ENCODE measurements at regions of chr10 and their contacts with region 1.

Region 1: GRCh38 chr10:67849331-67850011 is 11.5 kb upstream of the DNAJC12 start:
- DNase-seq: peak; percentile 99
- ATAC-seq: peak; percentile 95
- H3K4me3 ChIP-seq: peak overlapping the region; percentile 73
- H3K27ac ChIP-seq: peak overlapping the region; percentile 90
- H3K4me1 ChIP-seq: peaks cover 6% of the 10 kb centered on the region
- H3K27me3 ChIP-seq: no peaks in the 10 kb centered on the region
- CTCF ChIP-seq: no peak

Region 2: GRCh38 chr10:67788025-67788886 is 61.2 kb before region 1 on chr10:
- CTCF ChIA-PET with region 1: interaction called, 21 read pairs
- POLR2A ChIA-PET with region 1: interaction called, 3 read pairs
- intact Hi-C with region 1: loop called (anchors 1 kb)
- DNase-seq: peak; percentile 94
- ATAC-seq: peak; percentile 89
- H3K4me3 ChIP-seq: no peak overlapping the region
- H3K27ac ChIP-seq: no peak overlapping the region
- H3K4me1 ChIP-seq: peaks cover 8% of the 10 kb centered on the region; the same call in 1 of the 2 replicates
- H3K27me3 ChIP-seq: no peaks in the 10 kb centered on the region
- CTCF ChIP-seq: peak; percentile 99

Region 3: DNA sequence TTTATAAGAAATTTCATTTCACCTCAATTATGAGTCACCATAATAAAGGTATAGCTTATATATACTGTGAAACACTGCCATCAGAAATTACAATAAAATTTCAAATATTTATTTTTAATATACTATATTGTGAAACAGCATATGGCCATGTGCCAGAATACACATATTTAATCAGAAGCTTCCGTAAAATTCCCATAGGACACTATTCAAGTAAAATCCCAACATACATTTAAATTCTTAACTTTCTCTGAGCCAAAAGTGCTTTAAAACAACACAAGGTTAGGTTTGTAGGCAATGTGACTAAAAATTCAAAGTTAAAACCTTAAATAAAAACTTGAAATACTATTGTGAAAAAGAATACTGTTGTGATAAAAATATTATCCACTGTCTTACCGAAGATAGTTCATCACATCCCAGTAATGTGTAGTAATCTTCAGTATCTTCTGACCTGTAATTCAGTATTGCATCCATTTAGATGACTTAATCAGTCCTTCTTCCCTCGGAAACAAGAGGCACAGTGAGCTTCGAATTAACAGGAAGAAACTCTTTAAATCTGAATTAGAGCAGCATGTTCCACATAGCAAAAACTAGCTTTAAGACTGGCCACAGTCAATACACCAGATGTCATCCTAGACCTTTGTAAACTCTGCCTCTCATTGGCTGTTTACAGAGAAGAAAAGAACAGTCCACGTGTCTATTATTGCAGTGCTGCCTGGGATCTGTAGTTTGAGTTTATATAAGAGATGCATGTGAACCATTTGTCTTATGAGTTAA is 11.7 kb before region 1 on chr10 and contains the start of gene DNAJC12:
- CTCF ChIA-PET with region 1: interaction called, 4 read pairs
- POLR2A ChIA-PET with region 1: interaction called, 14 read pairs
- intact Hi-C with region 1: loop called (anchors 1 kb)
- DNase-seq: peak; percentile 78
- ATAC-seq: peak; percentile 85
- H3K4me3 ChIP-seq: peak within 1 kb of the TSS; percentile 42
- H3K27ac ChIP-seq: peak within 1 kb of the TSS; percentile 63
- H3K4me1 ChIP-seq: peaks cover 34% of the 10 kb centered on the region
- H3K27me3 ChIP-seq: no peaks in the 10 kb centered on the region
- CTCF ChIP-seq: no peak
- total RNA-seq, gene DNAJC12: 14.2 and 15.5 TPM in 2 replicates

Region 4: DNA sequence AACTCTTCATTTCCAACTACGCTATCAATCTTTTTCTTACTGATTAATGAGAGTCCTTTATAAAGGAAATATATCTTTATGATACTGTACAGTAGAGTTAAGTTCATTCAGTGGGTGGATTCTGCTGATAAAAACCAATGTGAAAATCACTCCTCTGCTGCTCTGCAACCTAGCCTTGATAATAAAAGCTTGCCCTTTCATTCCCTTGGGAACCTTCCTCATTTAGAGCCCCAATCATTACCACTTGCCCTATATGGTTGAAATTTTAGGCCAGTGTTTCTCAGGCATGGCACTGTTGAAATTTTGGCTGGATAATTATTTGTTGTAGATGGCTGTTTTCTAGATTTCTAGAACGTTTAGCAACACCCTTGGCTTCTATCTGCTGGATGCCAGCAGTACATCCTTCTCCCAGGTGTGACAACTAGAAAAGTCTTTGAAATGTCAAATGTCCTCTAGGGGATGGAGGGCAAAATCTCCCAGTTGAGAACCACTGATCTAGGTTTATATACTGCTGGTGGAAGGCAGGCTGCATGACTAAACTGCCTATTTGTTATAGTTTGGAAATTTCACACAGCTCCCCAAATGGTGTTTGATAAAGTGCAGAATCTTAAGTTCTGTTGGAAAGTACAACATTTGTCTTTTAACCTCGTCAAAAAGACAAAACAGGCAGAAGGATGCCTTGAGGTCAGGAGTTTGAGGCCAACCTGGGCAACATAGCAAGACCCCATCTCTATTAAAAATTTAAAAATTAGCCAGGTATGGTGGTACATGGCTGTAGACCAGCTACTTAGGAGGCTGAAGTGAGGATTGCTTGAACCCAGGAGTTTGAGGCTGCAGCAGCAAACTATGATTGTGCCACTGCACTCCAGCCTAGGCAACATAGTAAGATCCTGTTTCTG is 26.1 kb after region 1 on chr10:
- CTCF ChIA-PET with region 1: no interaction called
- POLR2A ChIA-PET with region 1: no interaction called
- intact Hi-C with region 1: no loop called
- DNase-seq: no peak
- ATAC-seq: no peak
- H3K4me3 ChIP-seq: no peak overlapping the region
- H3K27ac ChIP-seq: no peak overlapping the region
- H3K4me1 ChIP-seq: no peaks in the 10 kb centered on the region
- H3K27me3 ChIP-seq: no peaks in the 10 kb centered on the region
- CTCF ChIP-seq: no peak

Region 5: GRCh38 chr10:68074775-68075549 is 225.5 kb after region 1 on chr10 and contains the start of gene HERC4:
- CTCF ChIA-PET with region 1: no interaction called
- POLR2A ChIA-PET with region 1: no interaction called
- intact Hi-C with region 1: loop called (anchors 2 kb)
- DNase-seq: peak; percentile 97
- ATAC-seq: peak; percentile 86
- H3K4me3 ChIP-seq: peak within 1 kb of the TSS; percentile 87
- H3K27ac ChIP-seq: peak within 1 kb of the TSS; percentile 87
- H3K4me1 ChIP-seq: peaks cover 21% of the 10 kb centered on the region
- H3K27me3 ChIP-seq: no peaks in the 10 kb centered on the region
- CTCF ChIP-seq: no peak
- total RNA-seq, gene HERC4: 57.4 and 74.4 TPM in 2 replicates

Region 6: GRCh38 chr10:68331455-68332258 is 482.2 kb after region 1 on chr10 and contains the start of gene HNRNPH3:
- CTCF ChIA-PET with region 1: no interaction called
- POLR2A ChIA-PET with region 1: no interaction called
- intact Hi-C with region 1: loop called (anchors 10 kb)
- DNase-seq: peak; percentile 100
- ATAC-seq: peak; percentile 74
- H3K4me3 ChIP-seq: peak within 1 kb of the TSS; percentile 87
- H3K27ac ChIP-seq: peak within 1 kb of the TSS; percentile 82
- H3K4me1 ChIP-seq: peaks cover 44% of the 10 kb centered on the region
- H3K27me3 ChIP-seq: no peaks in the 10 kb centered on the region
- CTCF ChIP-seq: no peak
- total RNA-seq, gene HNRNPH3: 40.5 and 77.5 TPM in 2 replicates

Measured in PC-3 (cell line).